Activated naive CD4-positive, alpha-beta T cell treated with anti-CD3 and anti-CD28 coated beads for 36 hours (primary cell): ENCODE measurements at regions of chr18 and their contacts with region 1.

Region 1: DNA sequence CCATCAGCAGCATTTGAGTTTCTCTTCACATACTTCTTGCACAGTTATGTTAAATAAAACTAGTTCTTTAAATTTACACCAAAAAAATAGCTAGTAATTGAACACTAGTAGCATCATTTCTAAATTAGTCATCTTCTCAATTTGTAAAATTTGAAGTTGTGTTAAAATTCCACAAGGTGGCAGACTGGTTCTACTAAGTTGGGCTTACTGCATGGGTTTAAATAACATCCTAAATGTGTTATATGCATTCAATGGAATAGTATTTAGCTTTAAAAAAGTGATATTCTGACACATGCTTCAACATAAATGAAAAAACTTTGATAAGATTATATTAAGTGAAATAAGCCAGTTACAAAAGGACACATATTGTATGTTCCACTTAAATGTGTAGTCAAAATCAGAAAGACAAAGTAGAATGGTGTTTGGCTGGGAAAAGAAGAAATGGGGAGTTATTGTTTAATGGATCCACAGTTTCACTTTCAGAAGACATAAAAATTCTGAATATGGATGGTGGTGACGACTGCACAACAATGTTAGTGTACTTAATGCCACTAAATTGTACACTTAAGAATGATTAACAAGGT is 28.7 kb upstream of the RPRD1A start:
- DNase-seq: no peak
- H3K4me3 Mint-ChIP-seq: no peak overlapping the region
- H3K27ac Mint-ChIP-seq: no peak overlapping the region
- H3K4me1 Mint-ChIP-seq: no peaks in the 10 kb centered on the region
- H3K27me3 Mint-ChIP-seq: no peaks in the 10 kb centered on the region

Region 2: GRCh38 chr18:35386600-35387351 is 709.3 kb before region 1 on chr18:
- CTCF ChIA-PET with region 1: no interaction called
- intact Hi-C with region 1: loop called (anchors 10 kb)
- DNase-seq: peak; percentile 81
- H3K4me3 Mint-ChIP-seq: no peak overlapping the region
- H3K27ac Mint-ChIP-seq: no peak overlapping the region
- H3K4me1 Mint-ChIP-seq: peaks cover 2% of the 10 kb centered on the region
- H3K27me3 Mint-ChIP-seq: peaks cover 23% of the 10 kb centered on the region

Region 3: DNA sequence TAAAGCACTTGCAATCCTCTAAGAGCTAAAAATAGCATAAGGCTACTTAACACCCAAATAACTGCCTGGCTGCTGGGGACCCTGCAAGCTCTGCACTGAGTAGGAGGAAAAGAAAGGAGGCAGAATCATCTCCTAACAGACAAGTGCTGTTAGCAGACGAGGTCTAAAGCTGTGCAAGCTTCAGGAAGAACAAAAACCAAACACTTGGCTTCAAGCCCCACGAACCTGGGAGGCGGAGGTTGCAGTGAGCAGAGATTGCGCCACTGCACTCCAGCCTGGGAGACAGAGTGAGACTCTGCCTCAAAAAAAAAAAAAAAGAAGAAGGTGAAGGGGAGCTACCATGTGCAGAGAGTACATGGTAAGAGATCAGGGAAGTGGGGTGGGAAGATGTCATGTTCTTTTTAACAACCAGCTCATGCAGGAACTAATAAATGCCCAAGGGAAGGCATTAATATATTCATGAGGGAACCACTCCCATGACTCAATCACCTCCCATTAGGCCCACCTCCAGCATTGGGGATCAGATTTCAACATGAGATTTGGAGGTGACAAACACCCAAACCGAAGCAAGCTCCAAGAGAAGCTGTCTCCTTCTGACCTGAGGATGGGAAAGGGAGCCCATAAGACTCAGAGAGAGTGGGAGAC is 569.4 kb before region 1 on chr18:
- CTCF ChIA-PET with region 1: no interaction called
- intact Hi-C with region 1: no loop called
- DNase-seq: no peak
- H3K4me3 Mint-ChIP-seq: no peak overlapping the region
- H3K27ac Mint-ChIP-seq: no peak overlapping the region
- H3K4me1 Mint-ChIP-seq: peaks cover 4% of the 10 kb centered on the region
- H3K27me3 Mint-ChIP-seq: peaks cover 40% of the 10 kb centered on the region

Region 4: GRCh38 chr18:36015629-36016028 is 80.4 kb before region 1 on chr18:
- CTCF ChIA-PET with region 1: interaction called, 14 read pairs
- intact Hi-C with region 1: loop called (anchors 1 kb)
- DNase-seq: no peak
- H3K4me3 Mint-ChIP-seq: no peak overlapping the region
- H3K27ac Mint-ChIP-seq: no peak overlapping the region
- H3K4me1 Mint-ChIP-seq: peaks cover 2% of the 10 kb centered on the region
- H3K27me3 Mint-ChIP-seq: no peaks in the 10 kb centered on the region

Region 5: GRCh38 chr18:36572135-36572856 is 476.3 kb after region 1 on chr18:
- CTCF ChIA-PET with region 1: no interaction called
- intact Hi-C with region 1: loop called (anchors 1 kb)
- DNase-seq: peak; percentile 50
- H3K4me3 Mint-ChIP-seq: no peak overlapping the region
- H3K27ac Mint-ChIP-seq: no peak overlapping the region
- H3K4me1 Mint-ChIP-seq: no peaks in the 10 kb centered on the region
- H3K27me3 Mint-ChIP-seq: peaks cover 8% of the 10 kb centered on the region

Region 6: DNA sequence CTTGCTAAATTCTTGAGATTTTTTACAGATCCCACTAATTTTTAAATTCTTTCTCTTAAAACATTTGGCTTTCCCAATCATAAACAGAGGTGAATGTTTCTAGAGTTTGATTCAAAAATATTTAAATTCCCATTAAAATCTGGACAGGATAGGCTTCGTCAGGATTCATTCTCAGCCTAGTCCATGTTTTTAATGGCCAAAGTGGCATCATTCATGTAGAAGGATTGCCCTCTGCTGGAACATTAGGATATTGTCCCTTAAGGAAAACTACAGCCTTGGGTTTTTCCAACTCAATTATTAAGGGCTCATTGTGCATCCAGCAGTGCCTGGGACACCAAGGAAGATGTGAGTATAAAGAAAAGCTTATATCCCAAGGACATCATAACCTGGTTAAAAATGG is 661.1 kb after region 1 on chr18:
- CTCF ChIA-PET with region 1: no interaction called
- intact Hi-C with region 1: loop called (anchors 1 kb)
- DNase-seq: no peak
- H3K4me3 Mint-ChIP-seq: no peak overlapping the region
- H3K27ac Mint-ChIP-seq: no peak overlapping the region
- H3K4me1 Mint-ChIP-seq: no peaks in the 10 kb centered on the region
- H3K27me3 Mint-ChIP-seq: peaks cover 11% of the 10 kb centered on the region